Posterior cingulate gyrus (tissue), 11 donors: ENCODE measurements at regions of chr15 and their contacts with region 1.

Region 1: DNA sequence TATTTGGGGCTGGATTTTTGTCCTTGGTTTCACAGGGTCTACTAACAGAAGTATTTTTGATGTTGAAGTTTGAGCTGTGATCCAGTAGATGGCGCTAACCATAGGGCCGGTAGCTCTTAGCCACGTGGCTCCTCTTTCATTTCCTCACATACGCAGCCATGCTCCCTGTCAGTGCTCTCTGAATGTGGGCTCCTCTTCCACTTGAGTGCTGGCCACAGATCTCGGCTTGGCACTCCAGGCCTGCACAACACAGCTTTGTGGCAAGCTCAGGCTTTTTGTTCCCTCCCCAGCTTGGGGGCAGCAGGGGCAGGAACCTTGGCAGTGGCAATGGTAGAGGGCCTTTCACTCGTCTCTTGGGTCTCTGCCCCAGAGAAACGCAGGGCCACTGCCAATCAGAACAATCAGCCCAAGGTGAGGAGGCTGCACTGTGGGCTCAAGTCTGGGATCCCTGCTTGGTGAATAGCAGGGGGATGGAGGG is 18.6 kb upstream of the DNAAF4 start:
- DNase-seq: peak in 2 of 10 donors; percentile 9 to 37

Region 2: GRCh38 chr15:55422089-55422488 is 104.5 kb before region 1 on chr15:
- intact Hi-C with region 1: no loop called
- DNase-seq: no peak

Region 3: GRCh38 chr15:55468321-55468720 is 58.3 kb before region 1 on chr15:
- intact Hi-C with region 1: loop called (anchors 10 kb)
- DNase-seq: no peak

Region 4: GRCh38 chr15:55587321-55588069 is 60.9 kb after region 1 on chr15:
- intact Hi-C with region 1: no loop called
- DNase-seq: peak in 3 of 10 donors; percentile 19 to 83 (median 65)

Region 5: DNA sequence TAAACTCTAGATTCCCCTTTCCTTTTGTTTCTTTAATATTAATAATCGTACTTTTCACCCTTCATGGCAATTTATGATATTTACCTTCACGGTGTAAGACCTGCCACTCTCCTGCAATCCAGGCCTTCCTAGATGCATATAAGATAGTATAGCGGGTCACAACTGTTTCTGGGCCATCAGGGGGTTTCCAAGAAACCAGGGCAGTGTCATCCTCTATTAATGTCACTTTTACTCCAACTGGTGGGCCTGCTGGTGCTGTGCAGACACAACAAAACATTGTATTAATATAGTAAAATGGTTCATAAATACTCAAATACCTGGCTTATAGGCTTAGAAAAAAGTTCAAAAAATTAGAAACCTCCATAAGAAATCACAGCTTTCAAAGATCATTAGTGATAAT is 110.5 kb after region 1 on chr15:
- intact Hi-C with region 1: loop called (anchors 2 kb)
- DNase-seq: no peak

Region 6: DNA sequence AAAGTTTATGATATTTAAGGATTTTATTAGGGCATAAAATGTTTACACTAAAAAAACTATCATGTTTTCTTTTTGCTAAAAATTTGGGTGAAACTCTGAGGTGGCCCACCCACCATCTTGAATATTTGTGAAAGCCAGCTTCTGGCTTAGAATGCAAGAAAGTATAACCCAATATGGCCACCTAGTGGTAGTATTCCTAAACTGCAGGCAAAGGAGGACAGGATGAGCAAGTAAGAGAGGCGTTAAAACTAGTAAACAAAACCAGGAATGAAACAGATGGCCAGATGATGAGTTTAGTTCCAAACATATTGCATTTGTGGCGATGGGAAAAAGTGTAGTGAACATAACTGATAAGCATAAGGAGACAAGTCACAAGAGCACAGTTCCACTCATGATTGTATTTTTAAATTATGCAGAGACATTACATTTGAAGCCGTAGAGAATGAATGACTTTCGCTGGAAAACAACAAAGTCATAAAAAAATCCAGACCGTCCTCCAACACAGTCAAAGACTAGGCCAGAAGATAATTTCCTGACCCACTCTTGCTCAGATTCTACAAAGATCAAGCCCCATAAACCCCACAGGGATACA is 319.6 kb after region 1 on chr15:
- intact Hi-C with region 1: loop called (anchors 10 kb)
- DNase-seq: peak in 2 of 10 donors; percentile 5 to 24